Posterior vena cava (tissue), 2 donors: ENCODE measurements at regions of chr2 and their contacts with region 1.

Region 1: DNA sequence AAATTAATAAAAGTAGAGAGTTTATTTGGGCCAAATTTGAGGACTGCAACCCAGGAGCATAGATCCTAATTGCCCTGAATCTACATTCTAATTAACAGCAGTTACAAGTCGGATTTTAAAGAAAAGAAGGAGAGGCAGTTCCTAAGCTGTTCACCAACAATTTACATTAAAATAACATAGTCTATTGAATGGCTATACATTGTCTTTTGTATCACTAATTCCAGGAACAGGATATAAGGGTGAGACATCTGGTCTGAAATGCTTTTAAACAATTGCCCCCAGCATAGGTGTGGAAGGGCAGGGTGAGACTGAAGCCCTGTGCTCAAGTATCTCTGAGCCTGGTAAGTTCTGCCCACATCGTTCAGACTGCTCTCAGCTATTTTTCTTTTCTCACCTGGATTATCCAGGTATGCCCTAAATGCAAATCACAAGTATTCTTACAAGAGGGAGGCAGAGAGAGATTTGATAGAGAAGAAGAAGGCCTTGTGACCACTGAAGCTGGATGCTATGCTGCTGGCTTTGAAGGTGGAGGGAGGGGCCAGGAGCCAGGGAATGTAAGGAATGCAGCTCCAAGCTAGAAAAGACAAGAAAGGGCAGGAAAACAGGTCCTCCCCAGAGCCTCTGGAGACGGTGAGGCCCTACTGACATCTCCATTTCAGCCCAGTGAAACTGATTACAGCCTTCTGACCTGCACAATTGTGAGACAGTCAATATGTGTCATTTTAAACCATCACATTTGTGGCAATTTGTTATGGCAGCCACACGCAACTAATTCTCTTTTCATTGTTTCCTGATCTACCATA is 189.4 kb upstream of the ARL4C start:
- DNase-seq: no peak

Region 2: DNA sequence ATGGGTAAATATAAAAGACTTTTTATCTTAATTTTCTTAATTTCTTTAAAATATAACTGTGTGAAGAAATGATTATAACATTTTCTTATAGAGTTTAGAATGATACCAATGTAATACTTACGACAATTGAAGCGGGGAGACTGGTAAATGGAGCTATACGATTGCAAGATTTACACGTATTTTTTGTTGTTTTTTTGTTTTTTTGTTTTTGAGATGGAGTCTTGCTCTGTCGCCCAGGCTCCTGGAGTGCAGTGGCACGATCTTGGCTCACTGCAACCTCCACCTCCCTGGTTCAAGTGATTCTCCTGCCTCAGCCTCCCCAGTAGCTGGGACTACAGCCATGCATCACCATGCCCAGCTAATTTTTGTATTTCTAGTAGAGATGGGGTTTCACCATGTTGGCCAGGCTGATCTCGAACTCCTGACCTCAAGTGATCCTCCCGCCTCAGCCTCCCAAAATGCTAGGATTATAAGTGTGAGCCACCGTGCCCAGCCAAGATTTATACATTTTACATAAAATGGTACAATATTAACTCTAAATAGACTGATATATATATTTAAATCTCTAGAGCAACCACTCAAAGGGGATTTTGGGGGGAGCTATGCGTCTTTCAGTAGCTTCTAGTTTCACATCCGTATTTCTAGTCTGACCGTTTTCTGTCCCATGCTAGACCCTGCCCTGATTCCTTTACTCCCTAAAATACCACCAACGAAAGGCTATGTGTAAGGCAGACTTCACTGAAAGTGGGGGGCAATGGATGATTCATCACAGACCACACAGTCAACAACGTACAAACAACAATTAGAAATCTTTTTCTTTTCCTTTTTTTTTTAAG is 1463.0 kb before region 1 on chr2:
- intact Hi-C with region 1: loop called in 1 of 2 experiments (anchors 5 kb)
- DNase-seq: no peak

Region 3: DNA sequence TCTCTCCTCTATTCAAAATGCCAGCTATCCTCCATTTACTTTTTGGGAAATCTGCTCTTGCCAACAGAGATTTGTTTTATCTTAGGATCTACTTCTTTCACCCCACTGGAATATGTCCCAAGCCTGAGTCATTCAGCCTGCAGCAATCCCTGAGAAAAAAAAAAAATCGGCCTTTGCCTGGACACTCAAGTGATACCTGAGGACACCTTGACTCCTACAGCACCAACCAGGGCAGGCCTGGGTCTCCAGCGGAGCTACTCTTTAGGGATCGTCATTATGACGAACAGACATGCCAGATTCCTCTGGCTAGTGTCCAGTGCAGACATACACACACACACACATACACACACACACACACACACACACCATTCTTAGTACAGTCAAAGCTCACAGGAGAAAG is 995.9 kb before region 1 on chr2:
- intact Hi-C with region 1: no loop called
- DNase-seq: no peak

Region 4: GRCh38 chr2:234632527-234633391 is 53.5 kb before region 1 on chr2:
- intact Hi-C with region 1: no loop called
- DNase-seq: no peak

Region 5: GRCh38 chr2:234705108-234705507 is 18.8 kb after region 1 on chr2:
- intact Hi-C with region 1: no loop called
- DNase-seq: no peak